Dendritic cell treated with granulocyte-macrophage colony-stimulating factor and Interleukin-4, amounts not matched to agents 40 ng/mL and 50 ng/mL, for 4 days (primary cell): ENCODE measurements at regions of chr1 and their contacts with region 1.

Region 1: GRCh38 chr1:17826165-17826488 is 71.0 kb downstream of the ACTL8 start:
- H3K4me3 Mint-ChIP-seq: no peak overlapping the region
- H3K27ac Mint-ChIP-seq: no peak overlapping the region
- H3K4me1 Mint-ChIP-seq: no peaks in the 10 kb centered on the region
- H3K27me3 Mint-ChIP-seq: peaks cover 24% of the 10 kb centered on the region

Region 2: DNA sequence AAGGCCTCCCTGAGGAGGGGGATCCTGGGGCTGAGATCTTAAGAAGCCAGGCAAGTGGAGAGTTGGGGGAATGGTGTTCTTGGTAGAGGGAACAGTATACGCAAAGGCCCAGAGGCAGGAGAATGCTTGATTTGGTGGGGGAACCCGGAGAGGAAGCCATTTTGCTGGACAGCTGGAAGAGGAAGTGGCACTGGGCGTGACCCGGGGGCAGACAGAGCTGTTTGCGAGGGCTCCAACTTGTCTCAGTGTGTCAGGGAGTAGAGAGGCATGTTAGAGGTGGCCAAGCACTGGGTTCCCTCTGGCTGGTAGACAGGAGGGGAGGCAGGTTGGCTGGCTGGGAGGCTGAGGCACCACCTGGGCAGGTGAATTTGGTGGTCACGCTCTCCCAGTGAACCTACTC is 167.3 kb before region 1 on chr1:
- intact Hi-C with region 1: loop called (anchors 5 kb)
- H3K4me3 Mint-ChIP-seq: peak overlapping the region; percentile 48
- H3K27ac Mint-ChIP-seq: peak overlapping the region; percentile 81
- H3K4me1 Mint-ChIP-seq: peaks cover 50% of the 10 kb centered on the region
- H3K27me3 Mint-ChIP-seq: no peaks in the 10 kb centered on the region